Cardiac septum (tissue), 1 donor: ENCODE measurements at regions of chr5 and their contacts with region 1.

Region 1: DNA sequence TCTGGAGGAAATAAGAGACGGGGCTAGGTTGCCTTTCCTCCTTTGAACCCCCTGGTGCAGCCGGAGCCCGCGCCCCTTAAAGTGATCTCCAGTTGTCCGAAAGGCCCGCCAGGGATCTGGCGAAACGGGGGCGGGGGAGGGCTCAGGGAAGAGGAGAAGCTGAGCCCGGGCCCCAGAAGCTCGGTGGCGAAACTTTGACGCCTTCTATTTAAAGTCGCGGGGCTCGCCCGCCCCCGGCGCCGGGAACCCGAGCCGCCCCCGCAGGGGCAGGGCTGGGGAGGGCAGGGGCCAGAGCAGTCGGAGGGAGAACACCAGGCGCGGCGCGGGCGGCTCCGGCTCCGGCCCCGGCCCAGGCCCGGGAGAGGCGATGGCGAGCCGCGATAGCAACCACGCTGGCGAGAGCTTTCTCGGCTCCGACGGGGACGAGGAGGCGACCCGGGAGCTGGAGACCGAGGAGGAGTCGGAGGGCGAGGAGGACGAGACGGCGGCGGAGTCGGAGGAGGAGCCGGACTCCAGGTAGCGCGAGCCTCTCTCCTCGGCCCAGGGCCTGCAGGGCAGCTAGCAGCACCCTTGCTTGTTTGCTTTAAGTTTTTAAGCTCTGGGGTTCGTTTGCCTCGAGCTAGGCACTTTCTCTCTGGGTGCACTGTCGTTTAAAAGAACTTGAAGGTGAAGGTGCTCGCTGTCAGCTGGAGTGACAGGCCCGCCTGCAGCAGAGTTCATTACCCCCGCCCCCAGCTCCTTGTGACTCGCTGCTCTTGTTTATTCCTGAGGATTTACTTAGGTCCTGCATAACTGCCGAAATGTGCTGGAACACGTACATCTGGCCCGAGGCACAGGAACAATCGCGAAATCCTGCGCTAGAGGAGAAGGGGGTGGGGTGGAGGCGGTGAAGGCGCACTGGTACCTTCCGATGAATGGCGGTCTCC is at the start of gene CMYA5:
- DNase-seq: peak; percentile 83
- total RNA-seq, gene CMYA5: 1,204 TPM

Region 2: DNA sequence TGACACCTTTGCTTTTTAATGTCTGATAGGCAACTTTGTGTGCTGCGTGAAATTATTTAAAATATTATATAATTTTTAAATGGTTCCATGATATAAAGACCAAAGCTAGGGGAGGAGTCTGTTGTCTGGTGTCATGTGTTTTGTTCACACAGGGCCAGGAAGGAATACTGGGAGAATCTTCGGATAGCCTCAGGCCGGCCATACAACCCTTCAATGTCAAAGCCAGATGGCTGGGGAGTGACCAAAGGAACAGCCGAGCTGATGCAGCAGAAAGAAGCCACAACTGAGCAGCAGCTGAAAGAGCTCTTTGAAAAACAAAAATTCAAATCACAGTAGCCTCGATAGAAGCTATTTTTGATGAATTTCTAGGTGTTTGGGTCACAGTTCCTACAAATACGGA is 559.0 kb before region 1 on chr5:
- intact Hi-C with region 1: no loop called
- DNase-seq: no peak

Region 3: DNA sequence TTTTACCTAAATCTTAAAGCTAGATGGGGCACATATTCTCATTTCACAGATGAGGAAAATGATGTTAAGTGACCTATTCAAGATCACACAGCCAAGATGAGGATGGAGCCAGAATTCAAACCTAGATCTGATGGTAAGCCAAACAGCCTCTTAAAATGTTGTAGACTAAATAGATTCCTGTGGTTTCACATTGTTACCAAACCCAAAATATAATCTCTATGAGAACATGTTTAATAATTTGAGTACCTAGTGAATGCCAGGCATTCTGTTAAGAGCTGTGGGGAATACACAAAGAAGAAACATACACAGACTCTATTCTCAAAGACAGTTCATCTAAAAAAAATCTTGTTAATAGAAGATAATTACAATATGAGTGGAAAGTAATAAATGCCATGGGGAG is 201.0 kb before region 1 on chr5:
- intact Hi-C with region 1: loop called (anchors 10 kb)
- DNase-seq: no peak

Region 4: DNA sequence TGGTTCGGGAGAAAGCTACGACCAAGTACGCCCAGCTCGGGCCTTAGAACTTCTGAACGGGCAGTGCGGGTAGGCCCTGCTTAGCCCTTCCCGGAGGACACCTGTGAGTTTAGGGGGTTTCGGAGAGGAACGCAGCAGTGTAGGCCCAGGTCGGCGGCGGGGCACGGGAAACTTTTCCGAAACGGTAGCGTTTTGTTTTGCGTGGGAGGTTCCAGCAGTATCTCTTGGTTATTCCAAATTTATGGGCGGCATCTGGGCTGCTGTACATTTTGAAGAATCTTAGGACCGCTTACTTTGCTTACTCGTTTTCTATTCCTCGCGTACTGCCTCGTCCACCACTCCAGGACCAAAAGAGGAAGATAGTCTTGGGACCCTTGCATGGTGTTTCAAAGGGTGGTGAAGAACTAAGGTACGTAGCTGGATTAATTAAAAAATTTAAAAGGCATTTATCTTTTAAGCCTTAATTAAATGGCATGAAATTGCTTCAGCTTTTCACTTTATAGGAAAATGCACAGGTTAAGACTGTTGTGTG is 77.1 kb before region 1 on chr5:
- intact Hi-C with region 1: loop called (anchors 5 kb)
- DNase-seq: no peak

Region 5: DNA sequence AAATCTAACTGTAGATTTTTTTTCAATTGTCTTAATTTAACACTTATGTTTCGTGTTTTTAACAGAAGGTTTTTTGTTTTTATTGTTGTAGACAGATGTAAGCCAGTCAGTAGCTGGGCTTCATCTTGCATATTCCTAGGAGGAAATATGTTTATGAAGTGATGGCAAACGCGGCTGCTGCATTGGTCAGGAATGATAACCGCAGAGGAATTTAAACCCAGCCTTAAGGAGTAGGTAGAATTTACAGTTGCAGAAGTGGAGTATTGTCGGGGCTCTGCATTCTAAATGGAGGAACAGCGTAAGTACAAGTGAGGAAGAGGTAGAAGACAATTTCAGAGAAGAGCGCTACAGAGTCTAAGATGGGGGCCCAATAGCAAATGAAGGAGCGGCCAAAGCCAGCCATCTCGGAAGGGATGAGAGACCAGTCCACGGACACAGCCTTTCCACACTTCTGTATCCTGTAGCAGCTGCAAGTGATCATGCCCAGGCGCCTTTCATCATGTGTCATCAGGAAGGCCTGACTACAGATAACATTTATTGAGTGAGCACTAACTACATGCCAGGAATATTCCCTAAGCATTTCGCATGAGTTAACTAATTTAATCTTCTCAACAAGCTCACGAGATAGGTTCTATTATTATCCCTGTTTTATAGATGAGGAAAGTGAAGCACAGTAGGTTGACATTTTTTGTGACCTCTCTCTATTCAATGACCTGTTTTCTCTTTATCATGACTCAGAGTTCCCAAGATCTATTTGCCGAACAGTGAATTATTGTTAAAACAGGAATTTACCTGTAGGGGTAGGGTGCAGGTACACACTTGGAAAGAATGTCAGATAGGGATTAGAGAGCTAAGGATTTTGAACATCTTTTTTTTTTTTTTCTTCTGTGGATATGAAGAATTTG is 37.9 kb after region 1 on chr5:
- intact Hi-C with region 1: loop called (anchors 2 kb)
- DNase-seq: peak; percentile 80

Region 6: GRCh38 chr5:80069918-80070318 is 380.1 kb after region 1 on chr5:
- intact Hi-C with region 1: loop called (anchors 10 kb)
- DNase-seq: peak; percentile 77